Left ventricle myocardium inferior (tissue), 1 donor: ENCODE measurements at regions of chr9 and their contacts with region 1.

Region 1: GRCh38 chr9:121545875-121546423 is 46.3 kb upstream of the GGTA1 start:
- DNase-seq: peak; percentile 97
- H3K4me3 ChIP-seq: peak overlapping the region; percentile 48
- H3K27ac ChIP-seq: peak overlapping the region; percentile 60
- H3K4me1 ChIP-seq: peaks cover 27% of the 10 kb centered on the region
- H3K27me3 ChIP-seq: no peaks in the 10 kb centered on the region
- CTCF ChIP-seq: peak; percentile 98

Region 2: GRCh38 chr9:121464968-121465367 is 81.0 kb before region 1 on chr9:
- intact Hi-C with region 1: no loop called
- DNase-seq: no peak
- H3K4me3 ChIP-seq: no peak overlapping the region
- H3K27ac ChIP-seq: peak overlapping the region; percentile 39
- H3K4me1 ChIP-seq: peaks cover 25% of the 10 kb centered on the region
- H3K27me3 ChIP-seq: no peaks in the 10 kb centered on the region
- CTCF ChIP-seq: no peak

Region 3: GRCh38 chr9:121609845-121610570 is 64.1 kb after region 1 on chr9:
- intact Hi-C with region 1: loop called (anchors 10 kb)
- DNase-seq: no peak
- H3K4me3 ChIP-seq: no peak overlapping the region
- H3K27ac ChIP-seq: peak overlapping the region; percentile 88
- H3K4me1 ChIP-seq: peaks cover 98% of the 10 kb centered on the region
- H3K27me3 ChIP-seq: no peaks in the 10 kb centered on the region
- CTCF ChIP-seq: no peak

Region 4: GRCh38 chr9:121626012-121626411 is 80.1 kb after region 1 on chr9:
- intact Hi-C with region 1: no loop called
- DNase-seq: no peak
- H3K4me3 ChIP-seq: no peak overlapping the region
- H3K27ac ChIP-seq: peak overlapping the region; percentile 52
- H3K4me1 ChIP-seq: peaks cover 57% of the 10 kb centered on the region
- H3K27me3 ChIP-seq: no peaks in the 10 kb centered on the region
- CTCF ChIP-seq: no peak

Region 5: DNA sequence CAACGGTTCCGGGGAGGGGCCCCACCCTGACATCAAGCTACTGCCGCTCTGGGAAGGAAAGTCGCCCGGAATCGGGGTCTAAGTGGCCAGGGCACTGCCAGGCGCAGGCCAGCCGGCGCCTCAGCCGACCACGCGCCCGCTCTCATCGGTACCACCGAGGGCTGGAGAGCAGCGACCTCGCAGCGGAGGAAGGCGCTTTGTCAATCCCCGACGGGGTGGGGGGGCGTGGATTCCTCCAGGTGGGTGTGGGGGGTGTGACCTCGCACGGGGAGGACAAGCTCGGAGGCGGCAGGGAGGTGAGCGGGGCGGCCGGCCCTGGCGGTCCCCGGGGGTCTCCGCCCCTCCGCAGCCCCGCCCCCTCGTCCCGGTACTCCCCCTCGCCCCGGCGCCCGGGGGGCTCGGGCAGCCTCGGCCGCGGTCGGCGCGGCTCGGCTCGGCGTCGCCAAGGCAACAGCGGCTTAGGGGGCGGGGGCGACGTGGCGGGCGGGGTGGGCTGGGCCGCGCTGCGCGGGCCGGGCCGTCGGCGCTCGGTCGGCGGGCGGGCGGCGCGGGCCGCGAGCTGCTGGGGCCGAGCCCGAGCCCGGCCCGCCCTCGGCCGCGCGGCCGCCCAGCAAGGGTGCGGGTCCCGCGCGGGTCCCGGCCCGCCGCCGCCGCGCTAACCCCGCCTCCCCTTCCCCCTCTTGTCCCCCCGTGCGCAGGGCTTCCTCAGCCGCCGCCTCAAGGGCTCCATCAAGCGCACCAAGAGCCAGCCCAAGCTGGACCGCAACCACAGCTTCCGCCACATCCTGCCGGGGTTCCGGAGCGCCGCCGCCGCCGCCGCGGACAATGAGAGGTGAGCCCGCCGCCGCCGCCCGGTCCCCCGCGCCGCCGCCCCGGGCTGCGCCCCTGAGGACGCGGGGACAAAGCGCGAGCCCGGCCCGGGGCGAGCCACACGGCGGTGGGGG is 152.9 kb after region 1 on chr9:
- intact Hi-C with region 1: loop called (anchors 10 kb)
- DNase-seq: peak; percentile 77
- H3K4me3 ChIP-seq: peak overlapping the region; percentile 71
- H3K27ac ChIP-seq: peak overlapping the region; percentile 85
- H3K4me1 ChIP-seq: peaks cover 71% of the 10 kb centered on the region
- H3K27me3 ChIP-seq: no peaks in the 10 kb centered on the region
- CTCF ChIP-seq: no peak

Region 6: DNA sequence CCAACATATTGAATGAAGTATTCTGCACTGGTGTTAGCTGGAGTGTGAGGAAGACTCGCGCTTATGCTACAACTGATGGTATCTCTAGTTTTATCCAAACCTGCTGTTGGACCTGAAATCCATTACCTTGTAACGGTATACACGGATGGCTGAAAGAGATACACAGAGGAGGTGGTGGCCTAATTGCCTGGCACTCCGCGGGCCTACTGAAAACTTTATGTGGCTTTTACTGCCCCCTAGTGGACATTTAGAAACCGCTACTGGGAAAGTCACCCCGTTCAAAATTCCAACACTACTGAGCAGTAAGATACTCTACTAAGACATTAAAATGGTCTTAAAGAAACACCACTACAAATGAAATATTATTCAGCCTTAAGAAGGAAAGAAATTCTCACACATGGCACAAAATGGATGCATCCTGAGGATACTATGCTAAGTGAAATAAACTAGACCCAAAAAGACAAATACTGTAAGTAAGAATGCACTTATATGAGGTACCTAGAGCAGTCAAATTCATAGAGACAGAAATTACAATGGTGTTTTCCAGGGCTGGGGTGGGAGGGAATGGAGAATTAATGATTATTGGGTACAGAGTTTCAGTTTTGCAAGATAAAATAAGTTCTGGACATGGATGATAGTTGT is 446.7 kb after region 1 on chr9:
- intact Hi-C with region 1: loop called (anchors 5 kb)
- DNase-seq: peak; percentile 49
- H3K4me3 ChIP-seq: no peak overlapping the region
- H3K27ac ChIP-seq: no peak overlapping the region
- H3K4me1 ChIP-seq: peaks cover 22% of the 10 kb centered on the region
- H3K27me3 ChIP-seq: no peaks in the 10 kb centered on the region
- CTCF ChIP-seq: peak; percentile 86